PC-3 (cell line): ENCODE measurements at regions of chr11 and their contacts with region 1.

Region 1: DNA sequence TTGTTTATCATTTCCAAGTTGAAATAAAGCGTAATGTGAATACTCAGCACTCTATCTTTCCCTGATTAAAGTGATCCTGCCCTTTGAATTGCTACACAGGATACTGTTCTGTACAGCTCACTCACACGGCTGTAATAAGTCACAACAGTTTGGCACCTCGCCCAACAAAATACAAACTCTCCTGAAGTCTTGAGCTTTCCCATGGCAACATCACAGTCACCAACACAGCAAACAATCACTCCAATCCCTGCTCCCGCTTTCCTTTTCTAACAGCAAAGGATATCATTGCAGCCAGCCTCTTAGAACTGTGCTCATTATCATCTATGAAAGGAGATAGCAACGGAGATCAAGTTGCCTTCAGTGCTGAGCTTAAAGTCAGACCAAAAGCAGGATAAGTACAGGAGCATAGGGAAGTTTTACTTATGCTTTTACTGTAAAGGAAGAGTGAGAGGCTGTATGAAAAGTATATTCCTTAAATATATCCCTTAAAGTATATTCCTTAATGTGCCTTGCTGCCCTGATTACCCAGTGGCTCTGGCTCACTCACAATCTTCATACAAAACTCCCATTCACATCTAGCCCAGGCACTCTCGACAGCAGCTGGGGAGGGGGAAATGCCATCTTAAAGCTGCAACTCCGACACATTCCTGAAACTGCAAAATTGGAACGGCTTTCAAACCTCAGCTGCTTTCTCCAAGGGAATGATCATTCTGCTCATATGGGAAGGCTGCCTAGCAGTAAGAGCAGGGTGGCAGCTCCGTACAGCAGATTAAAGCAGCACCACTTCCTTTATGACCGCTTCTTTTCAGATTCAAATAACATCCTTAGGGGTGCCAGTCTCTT is 35.8 kb downstream of the MAML2 start:
- DNase-seq: peak; percentile 100
- ATAC-seq: peak; percentile 68
- H3K4me3 ChIP-seq: peak overlapping the region; percentile 60
- H3K27ac ChIP-seq: peak overlapping the region; percentile 96
- H3K4me1 ChIP-seq: peaks cover 90% of the 10 kb centered on the region
- H3K27me3 ChIP-seq: no peaks in the 10 kb centered on the region
- CTCF ChIP-seq: no peak

Region 2: GRCh38 chr11:95790123-95790932 is 516.8 kb before region 1 on chr11 and contains the start of gene CEP57:
- CTCF ChIA-PET with region 1: no interaction called
- POLR2A ChIA-PET with region 1: no interaction called
- intact Hi-C with region 1: loop called (anchors 2 kb)
- DNase-seq: peak; percentile 99
- ATAC-seq: peak; percentile 73
- H3K4me3 ChIP-seq: peak within 1 kb of the TSS; percentile 86
- H3K27ac ChIP-seq: peak within 1 kb of the TSS; percentile 87
- H3K4me1 ChIP-seq: peaks cover 42% of the 10 kb centered on the region
- H3K27me3 ChIP-seq: no peaks in the 10 kb centered on the region
- CTCF ChIP-seq: no peak
- total RNA-seq, gene CEP57: 36.7 and 38.1 TPM in 2 replicates

Region 3: DNA sequence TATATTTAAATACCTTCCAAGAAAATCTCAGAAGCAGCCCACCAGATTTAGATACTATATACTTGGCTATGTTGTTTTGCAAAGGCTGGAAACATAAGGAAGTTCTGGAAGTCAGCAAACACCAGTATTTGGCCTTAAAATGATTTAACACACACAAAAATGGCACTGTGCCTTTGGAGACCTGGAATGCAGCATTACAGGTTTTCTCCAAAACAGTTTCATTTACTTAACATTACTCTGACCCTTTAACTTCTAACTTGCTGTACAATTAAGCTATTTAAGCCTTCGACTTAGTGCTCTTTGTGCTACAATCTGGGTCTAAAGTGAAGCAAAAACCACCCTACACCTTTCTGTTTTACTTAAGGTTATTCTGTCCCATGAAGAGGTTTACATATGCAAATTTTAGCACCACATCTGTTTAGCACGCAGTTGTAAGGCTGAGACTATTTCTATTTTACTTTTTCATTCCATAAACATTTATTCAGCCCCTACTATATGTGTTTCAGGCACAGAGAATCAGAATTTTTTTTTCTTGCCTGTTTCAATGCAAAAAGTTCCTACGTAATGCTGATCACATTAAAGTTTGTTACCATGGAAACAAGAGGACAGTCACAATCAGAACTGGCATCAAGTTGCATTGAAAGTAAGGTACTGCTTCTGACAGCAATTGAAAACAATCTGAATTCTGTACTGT is 34.5 kb before region 1 on chr11:
- CTCF ChIA-PET with region 1: no interaction called
- POLR2A ChIA-PET with region 1: interaction called, 9 read pairs
- intact Hi-C with region 1: loop called (anchors 2 kb)
- DNase-seq: peak; percentile 95
- ATAC-seq: peak; percentile 79
- H3K4me3 ChIP-seq: peak overlapping the region; percentile 43
- H3K27ac ChIP-seq: peak overlapping the region; percentile 84
- H3K4me1 ChIP-seq: peaks cover 25% of the 10 kb centered on the region
- H3K27me3 ChIP-seq: no peaks in the 10 kb centered on the region
- CTCF ChIP-seq: no peak

Region 4: DNA sequence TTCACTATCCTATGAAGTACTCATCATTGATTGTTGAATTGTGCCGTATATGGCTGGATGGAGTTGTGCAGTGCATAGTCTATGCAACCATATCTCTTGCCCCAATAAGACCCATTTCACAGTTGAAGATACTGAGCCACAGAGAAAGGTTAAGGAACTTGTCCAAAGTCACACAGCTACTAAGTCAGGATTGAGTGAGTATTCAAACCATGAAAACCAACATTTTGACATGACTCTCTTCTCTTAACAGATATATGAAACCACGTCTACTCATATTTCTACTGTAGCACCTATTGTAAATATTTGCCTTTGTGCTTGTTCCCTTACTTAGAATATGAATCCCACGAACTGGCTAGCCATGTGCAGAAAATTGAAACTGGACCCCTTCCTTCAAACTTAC is 22.2 kb before region 1 on chr11:
- CTCF ChIA-PET with region 1: no interaction called
- POLR2A ChIA-PET with region 1: no interaction called
- intact Hi-C with region 1: loop called (anchors 2 kb)
- DNase-seq: peak; percentile 64
- ATAC-seq: peak; percentile 88
- H3K4me3 ChIP-seq: no peak overlapping the region
- H3K27ac ChIP-seq: peak overlapping the region; percentile 21
- H3K4me1 ChIP-seq: peaks cover 38% of the 10 kb centered on the region
- H3K27me3 ChIP-seq: no peaks in the 10 kb centered on the region
- CTCF ChIP-seq: no peak